ENCODE measurements at regions of chr1 and their contacts with region 1.

Region 1: DNA sequence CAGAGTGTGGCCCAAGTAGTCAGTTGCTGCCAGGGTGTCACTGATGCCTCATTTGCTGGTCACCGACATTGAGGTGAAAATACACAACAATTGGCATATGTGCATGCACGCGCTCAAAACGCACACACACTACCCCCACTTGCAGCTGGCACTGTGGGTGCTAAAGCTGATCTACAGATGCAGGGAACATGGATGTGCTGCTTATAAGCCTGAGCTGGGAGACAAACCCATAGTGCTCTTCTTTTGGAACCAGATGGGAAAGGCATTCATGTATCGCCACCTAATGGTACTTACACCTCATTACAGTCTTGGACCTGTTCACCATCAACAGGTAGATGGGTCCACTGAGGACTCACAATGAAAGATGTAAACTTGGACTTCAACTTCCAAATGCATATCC is 70.3 kb upstream of the CAMK1G start:
- DNase-seq: no peak
- H3K4me3 Mint-ChIP-seq: no peak overlapping the region
- H3K27ac Mint-ChIP-seq: no peak overlapping the region
- H3K4me1 Mint-ChIP-seq: no peaks in the 10 kb centered on the region
- H3K27me3 Mint-ChIP-seq: peaks cover 4% of the 10 kb centered on the region

Region 2: DNA sequence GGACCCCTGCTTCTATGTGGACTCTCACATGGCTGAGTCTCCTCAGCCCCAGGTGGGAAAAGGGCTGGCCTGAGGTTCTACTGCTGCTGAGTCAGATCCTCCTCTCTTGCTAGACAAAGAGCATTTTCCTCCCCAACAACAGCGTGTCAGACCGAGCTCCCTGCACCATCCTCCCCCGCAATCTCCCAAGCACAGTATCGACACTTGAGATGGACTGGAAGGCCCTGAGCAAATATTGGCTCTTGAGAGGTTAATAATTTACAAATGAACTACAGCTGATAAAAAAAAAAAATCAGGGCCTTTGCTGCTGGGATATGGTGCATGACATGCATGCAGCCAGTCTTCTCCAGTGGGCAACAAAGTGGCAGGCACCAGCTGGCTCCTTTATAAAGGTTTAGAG is 14.8 kb after region 1 on chr1:
- CTCF ChIA-PET with region 1: interaction called, 10 read pairs
- DNase-seq: no peak
- H3K4me3 Mint-ChIP-seq: no peak overlapping the region
- H3K27ac Mint-ChIP-seq: no peak overlapping the region
- H3K4me1 Mint-ChIP-seq: no peaks in the 10 kb centered on the region
- H3K27me3 Mint-ChIP-seq: peaks cover 29% of the 10 kb centered on the region

Region 3: DNA sequence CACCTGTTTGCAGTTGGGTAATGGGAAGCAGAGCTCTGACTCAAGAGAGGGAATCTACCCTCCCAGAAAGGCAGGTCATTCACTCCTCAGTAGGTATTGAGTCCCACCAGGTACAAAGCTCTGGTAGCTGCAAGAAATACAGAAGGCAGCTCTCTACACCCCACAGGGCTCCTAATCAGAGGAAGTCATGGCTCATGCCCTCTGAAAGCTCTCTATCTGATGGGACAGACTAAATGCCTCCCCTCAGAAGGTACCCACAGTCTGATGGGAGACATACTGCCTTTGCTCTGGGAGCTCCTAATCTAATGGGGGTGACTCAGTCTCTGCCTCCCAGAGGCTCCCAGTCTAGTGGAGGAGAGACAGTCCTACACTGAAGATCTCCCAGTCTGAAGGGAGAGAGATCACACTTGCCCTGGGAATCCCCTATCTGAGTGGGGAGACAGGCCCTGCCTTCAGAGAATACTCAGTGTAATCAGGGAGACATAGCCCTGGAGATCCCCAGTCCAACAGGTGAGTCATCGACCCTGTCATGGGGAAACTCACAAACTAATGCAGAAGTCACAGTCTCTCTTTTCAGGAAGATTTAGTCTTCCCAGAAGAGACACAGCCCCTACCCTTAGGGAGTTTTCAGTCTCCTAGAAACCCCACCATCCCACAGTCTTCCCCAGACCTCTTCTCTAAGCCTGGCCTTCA is 94.0 kb after region 1 on chr1:
- CTCF ChIA-PET with region 1: no interaction called
- DNase-seq: no peak
- H3K4me3 Mint-ChIP-seq: no peak overlapping the region
- H3K27ac Mint-ChIP-seq: no peak overlapping the region
- H3K4me1 Mint-ChIP-seq: peaks cover 15% of the 10 kb centered on the region
- H3K27me3 Mint-ChIP-seq: no peaks in the 10 kb centered on the region

Region 4: DNA sequence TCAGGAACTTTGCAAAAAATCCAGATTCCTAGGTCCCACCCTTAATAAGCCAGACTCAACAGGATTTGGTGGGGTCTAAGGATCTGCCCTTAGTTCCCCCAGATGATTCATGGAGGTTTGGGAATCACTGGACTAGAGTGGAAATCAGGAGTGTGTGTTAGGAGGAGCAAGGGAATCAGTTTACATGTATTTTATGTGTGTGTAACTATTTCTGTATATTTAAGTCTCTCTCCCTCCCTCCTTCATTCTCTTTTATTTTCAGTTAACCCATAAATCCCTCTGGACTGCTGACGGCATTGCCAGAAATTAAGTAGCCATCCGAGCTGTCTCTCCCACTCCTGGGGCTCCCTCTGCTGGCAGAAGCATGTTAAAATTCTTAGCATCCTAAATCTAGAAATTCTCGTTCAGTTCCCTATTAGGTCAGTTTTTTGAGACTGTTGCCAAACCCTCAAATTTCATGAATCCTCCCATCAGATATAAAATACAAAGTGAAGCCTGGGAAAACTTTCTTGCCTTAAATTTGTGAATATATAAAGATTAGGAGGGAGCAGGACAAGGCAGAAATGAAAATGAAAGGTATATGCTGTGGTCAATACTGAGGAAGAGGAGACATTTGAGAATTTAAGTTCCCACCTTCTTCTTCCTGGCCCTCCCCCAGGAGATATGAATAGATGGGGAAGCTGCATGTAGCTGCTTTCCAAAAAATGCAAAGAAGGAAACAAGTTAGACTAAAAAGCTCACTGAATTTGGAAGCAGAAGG is 179.7 kb after region 1 on chr1:
- CTCF ChIA-PET with region 1: no interaction called
- DNase-seq: peak; percentile 81
- H3K4me3 Mint-ChIP-seq: no peak overlapping the region
- H3K27ac Mint-ChIP-seq: no peak overlapping the region
- H3K4me1 Mint-ChIP-seq: peaks cover 60% of the 10 kb centered on the region
- H3K27me3 Mint-ChIP-seq: peaks cover 10% of the 10 kb centered on the region